ENCODE measurements at regions of chr15 and their contacts with region 1.

Region 1: DNA sequence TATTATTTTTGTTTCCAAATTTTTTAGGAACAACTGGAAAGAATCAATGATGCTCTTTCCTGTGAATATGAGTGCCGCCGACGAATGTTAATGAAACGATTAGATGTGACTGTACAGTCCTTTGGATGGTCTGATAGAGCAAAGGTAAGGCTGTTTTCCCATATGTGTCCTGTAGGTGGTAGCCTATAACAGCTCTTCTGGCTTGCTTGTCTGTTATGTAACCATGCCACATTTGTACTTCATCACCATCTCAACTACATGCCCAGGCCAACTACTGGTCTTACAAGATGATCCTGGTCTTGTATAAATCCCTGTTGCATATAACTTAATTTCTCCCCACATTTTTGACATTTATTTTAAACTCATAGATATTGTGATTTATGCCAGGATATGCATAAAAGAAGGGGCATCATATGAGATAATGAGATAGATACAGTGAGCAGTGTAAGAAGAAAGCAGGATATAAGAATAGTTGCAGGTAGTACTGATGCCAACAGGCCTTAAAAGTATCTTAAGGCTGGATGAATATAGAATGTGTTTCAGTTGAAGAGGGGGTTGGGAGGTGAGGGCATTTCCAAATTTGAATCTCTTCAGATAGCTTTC is 20.3 kb downstream of the FAM98B start:
- DNase-seq: peak; percentile 11 to 38 (median 30)
- H3K4me3 ChIP-seq: no peak overlapping the region
- H3K4me3 Mint-ChIP-seq: no peak overlapping the region
- H3K27ac ChIP-seq: no peak overlapping the region
- H3K27ac Mint-ChIP-seq: no peak overlapping the region
- H3K4me1 ChIP-seq: no peaks in the 10 kb centered on the region
- H3K4me1 Mint-ChIP-seq: no peaks in the 10 kb centered on the region
- H3K27me3 ChIP-seq: no peaks in the 10 kb centered on the region
- H3K27me3 Mint-ChIP-seq: no peaks in the 10 kb centered on the region
- CTCF ChIP-seq: peak; percentile 77

Region 2: GRCh38 chr15:38041576-38041975 is 432.7 kb before region 1 on chr15:
- intact Hi-C with region 1: no loop called
- DNase-seq: no peak
- H3K4me3 ChIP-seq: no peak overlapping the region
- H3K4me3 Mint-ChIP-seq: no peak overlapping the region
- H3K27ac ChIP-seq: peak overlapping the region in 1 of 2 donors; percentile 86
- H3K27ac Mint-ChIP-seq: no peak overlapping the region
- H3K4me1 ChIP-seq: peaks cover 35 to 39% of the 10 kb centered on the region in 2 donors
- H3K4me1 Mint-ChIP-seq: peaks cover 33% of the 10 kb centered on the region
- H3K27me3 ChIP-seq: peaks cover 0 to 4% of the 10 kb centered on the region in 2 donors
- H3K27me3 Mint-ChIP-seq: peaks cover 1 to 3% (median 2%) of the 10 kb centered on the region in 3 donors
- CTCF ChIP-seq: no peak

Region 3: DNA sequence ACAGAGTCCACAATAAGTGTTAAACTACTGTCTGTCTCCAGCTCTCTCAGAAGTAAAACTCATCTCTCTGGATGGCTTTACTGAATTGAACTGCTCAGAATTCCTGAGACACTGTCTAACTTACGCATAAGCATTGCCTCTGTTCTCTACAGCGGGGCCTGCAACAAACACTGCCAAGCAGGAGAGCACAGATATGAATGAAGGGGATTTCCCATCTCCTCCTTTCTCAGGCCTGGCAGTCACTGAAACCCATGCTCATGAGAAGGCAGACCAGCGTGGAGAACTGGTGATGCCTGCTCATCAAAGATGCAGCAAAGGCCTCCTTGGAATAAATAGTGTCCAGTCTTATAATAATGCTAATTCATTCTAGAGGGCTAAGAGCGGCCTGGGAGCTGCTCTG is 80.1 kb after region 1 on chr15:
- intact Hi-C with region 1: no loop called
- DNase-seq: no peak
- H3K4me3 ChIP-seq: no peak overlapping the region
- H3K4me3 Mint-ChIP-seq: no peak overlapping the region
- H3K27ac ChIP-seq: no peak overlapping the region
- H3K27ac Mint-ChIP-seq: no peak overlapping the region
- H3K4me1 ChIP-seq: peaks cover 0 to 4% of the 10 kb centered on the region in 2 donors
- H3K4me1 Mint-ChIP-seq: peaks cover 12% of the 10 kb centered on the region
- H3K27me3 ChIP-seq: no peaks in the 10 kb centered on the region
- H3K27me3 Mint-ChIP-seq: peaks cover 0 to 2% (median 0%) of the 10 kb centered on the region in 3 donors
- CTCF ChIP-seq: no peak

Region 4: DNA sequence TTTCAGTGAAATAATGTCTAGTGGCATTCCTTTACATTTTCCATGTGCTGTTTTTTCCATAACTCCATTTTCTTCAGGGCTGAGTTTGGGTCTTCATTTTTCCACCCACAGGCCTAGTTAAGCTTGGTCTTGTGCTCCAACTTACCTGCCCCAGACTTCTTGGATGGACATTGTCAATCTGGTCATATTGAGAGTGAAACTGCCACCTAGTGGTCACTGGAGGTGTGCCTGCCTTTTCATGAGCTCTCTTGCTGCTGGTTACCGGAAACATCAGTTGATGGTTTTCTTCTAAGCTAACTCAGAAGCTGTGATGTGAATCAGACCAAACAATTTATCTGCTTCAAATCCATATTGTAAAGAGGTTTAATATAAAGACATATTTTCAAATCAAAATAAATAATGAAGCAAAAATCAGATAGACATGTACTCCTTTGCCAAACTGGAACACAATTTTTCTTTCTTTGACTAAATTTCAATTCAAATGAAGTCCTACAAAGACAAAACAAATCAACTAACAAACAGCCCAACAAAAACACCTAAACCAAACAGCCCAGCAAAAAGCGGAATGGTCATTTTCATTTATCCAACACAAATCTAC is 225.5 kb after region 1 on chr15:
- intact Hi-C with region 1: loop called in 1 of 2 experiments (anchors 10 kb)
- DNase-seq: peak; percentile 34 to 50 (median 49)
- H3K4me3 ChIP-seq: no peak overlapping the region
- H3K4me3 Mint-ChIP-seq: no peak overlapping the region
- H3K27ac ChIP-seq: no peak overlapping the region
- H3K27ac Mint-ChIP-seq: no peak overlapping the region
- H3K4me1 ChIP-seq: peaks cover 0 to 7% of the 10 kb centered on the region in 2 donors
- H3K4me1 Mint-ChIP-seq: peaks cover 10% of the 10 kb centered on the region
- H3K27me3 ChIP-seq: no peaks in the 10 kb centered on the region
- H3K27me3 Mint-ChIP-seq: peaks cover 0 to 5% (median 3%) of the 10 kb centered on the region in 3 donors
- CTCF ChIP-seq: peak; percentile 91